Activated CD4-positive, alpha-beta T cell treated with anti-CD3 and anti-CD28 coated beads, Interleukin-2, amount 10 ng/mL, durations not matched to agents 7 days and 5 days (primary cell): ENCODE measurements at regions of chr16 and their contacts with region 1.

Region 1: GRCh38 chr16:50735629-50736122 is 6.2 kb upstream of the CYLD start:
- DNase-seq: no peak
- H3K4me3 Mint-ChIP-seq: no peak overlapping the region
- H3K27ac Mint-ChIP-seq: no peak overlapping the region
- H3K4me1 Mint-ChIP-seq: peaks cover 34% of the 10 kb centered on the region
- H3K27me3 Mint-ChIP-seq: no peaks in the 10 kb centered on the region

Region 2: GRCh38 chr16:50719518-50720337 is 15.9 kb before region 1 on chr16:
- CTCF ChIA-PET with region 1: interaction called, 11 read pairs
- POLR2A ChIA-PET with region 1: no interaction called
- DNase-seq: no peak
- H3K4me3 Mint-ChIP-seq: no peak overlapping the region
- H3K27ac Mint-ChIP-seq: peak overlapping the region; percentile 60
- H3K4me1 Mint-ChIP-seq: peaks cover 25% of the 10 kb centered on the region
- H3K27me3 Mint-ChIP-seq: no peaks in the 10 kb centered on the region

Region 3: DNA sequence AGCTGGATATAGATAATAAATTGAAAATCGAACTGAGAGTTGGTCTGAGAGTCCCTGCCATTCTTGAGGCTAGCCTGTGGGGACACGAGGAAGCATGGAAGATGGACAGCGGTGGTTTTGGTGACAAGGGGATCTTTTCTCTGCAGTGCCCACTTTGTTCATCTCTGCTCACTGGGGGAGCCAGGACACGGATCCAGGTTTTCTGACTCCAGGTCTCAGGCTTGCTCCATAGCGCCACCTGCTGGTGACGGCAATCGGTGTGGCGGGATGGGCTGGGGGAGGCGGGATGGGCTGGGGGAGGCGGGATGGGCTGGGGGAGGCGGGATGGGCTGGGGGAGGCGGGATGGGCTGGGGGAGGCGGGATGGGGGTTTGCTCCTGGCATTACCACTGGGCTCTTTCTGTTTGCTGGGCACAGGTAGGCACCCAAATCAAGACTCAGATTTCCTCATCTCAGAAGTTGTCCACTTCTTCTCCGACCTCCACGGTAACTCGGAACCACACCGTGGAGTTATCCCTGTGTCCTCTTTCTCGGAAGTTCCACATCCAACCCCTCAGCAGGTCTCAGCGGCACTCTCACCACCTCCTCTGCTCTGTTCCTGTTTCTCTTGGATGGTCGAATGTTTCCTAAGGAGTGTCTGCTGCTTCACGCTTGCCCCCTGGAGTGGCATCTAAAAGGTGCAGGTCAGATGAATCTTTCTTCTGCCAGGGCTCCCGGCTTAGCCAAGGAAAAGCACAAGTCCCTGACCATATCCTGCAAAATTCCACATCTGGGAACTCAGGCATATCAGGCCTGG is 148.6 kb after region 1 on chr16:
- CTCF ChIA-PET with region 1: no interaction called
- POLR2A ChIA-PET with region 1: no interaction called
- DNase-seq: peak; percentile 35
- H3K4me3 Mint-ChIP-seq: no peak overlapping the region
- H3K27ac Mint-ChIP-seq: no peak overlapping the region
- H3K4me1 Mint-ChIP-seq: no peaks in the 10 kb centered on the region
- H3K27me3 Mint-ChIP-seq: no peaks in the 10 kb centered on the region